H1 (cell line): ENCODE measurements at regions of chr14 and their contacts with region 1.

Region 1: GRCh38 chr14:21748869-21749303 is 75.3 kb upstream of the OR4E1 start:
- DNase-seq: peak; percentile 23 to 68
- H3K4me3 ChIP-seq: no peak overlapping the region
- H3K27ac ChIP-seq: no peak overlapping the region
- H3K4me1 ChIP-seq: no peaks in the 10 kb centered on the region; a peak in 1 of 7 replicates
- H3K27me3 ChIP-seq: no peaks in the 10 kb centered on the region
- CTCF ChIP-seq: peak; percentile 28 to 88 (median 83)
- EP300 ChIP-seq: no peak
- POLR2A ChIP-seq: no peak
- RAD21 ChIP-seq: peak; percentile 69 to 72

Region 2: DNA sequence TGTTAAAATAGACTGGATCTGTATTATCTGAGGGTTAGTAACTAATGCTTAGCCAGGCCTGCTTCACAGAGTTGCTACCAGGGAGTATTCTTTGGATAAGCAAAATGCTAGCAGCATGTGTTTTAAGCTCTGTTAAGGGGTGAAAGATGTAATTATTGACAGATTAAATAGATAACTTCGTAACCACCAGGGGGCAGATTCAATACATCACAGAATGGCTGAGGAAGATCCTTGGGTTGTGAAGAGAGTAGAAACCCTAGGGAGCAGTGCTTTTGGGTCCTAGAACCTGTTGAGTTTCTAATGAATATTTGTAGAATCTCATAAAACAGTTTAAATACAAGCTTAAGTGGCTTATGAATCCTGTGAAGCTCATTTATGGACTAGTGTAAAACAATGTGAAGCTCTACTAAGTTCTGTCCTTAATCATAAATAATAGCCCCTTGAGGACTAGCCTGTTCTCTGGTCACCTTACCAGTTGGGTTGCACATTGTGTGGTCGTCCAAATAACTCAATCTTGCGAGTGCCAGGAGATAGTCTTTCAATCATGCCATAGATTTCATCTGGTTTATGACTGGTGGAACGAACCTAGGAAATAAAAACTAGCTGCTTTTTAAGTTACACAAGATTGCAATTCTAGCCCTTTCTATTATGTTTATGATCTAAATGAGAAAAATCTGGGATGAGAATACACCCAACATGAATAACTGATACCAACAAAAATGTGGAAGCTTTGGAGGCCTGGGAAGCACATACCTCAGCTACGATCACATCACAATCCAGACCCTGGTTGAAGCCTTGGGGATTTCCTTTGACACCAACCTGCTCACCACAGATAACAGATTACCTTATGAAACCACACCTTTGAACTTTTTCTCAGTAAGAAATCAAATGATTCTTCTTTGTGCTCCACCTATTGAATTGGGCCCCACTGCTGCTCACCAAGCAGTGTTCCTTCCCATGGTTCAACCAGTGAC is 250.0 kb before region 1 on chr14:
- CTCF ChIA-PET with region 1: no interaction called
- POLR2A ChIA-PET with region 1: no interaction called
- DNase-seq: peak in 1 of 2 experiments; percentile 43
- H3K4me3 ChIP-seq: no peak overlapping the region
- H3K27ac ChIP-seq: peak overlapping the region; percentile 55; the same call in 1 of the 2 replicates
- H3K4me1 ChIP-seq: peaks cover 0 to 2% (median 1%) of the 10 kb centered on the region in 4 experiments; a peak in 2 of 7 replicates
- H3K27me3 ChIP-seq: no peaks in the 10 kb centered on the region
- CTCF ChIP-seq: peak in 2 of 3 experiments; percentile 51 to 56; a peak in 3 of 4 replicates
- EP300 ChIP-seq: no peak
- POLR2A ChIP-seq: no peak
- RAD21 ChIP-seq: peak; percentile 77 to 81

Region 3: DNA sequence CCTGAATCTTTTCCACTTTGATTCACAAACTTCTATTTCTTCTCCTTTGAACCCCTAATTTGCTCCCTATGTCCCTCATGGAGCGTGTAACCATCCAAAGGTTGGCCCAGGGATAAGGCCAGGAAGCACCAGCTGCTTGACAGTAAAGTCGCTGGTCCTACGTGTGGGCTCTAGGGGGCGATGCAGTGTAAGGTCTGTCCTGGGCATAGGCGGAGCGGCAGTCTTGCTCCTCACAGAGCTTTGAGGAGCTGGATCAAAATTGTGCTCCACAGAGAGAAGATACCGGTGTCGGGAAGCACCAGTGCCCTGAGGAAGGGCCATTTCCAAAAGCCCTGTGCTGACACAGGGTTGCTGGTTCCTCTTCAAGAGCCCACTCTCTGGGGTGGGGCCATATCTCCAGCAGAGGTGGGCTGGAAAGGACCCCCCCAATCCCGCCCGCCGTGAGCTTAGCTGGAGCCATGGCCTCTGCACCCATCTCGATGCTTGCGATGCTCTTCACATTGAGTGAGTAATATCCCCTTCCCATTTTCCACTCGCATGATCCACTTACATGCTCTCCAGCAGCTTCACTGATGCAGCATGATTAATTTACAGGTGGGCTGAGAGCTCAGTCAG is 25.3 kb before region 1 on chr14:
- CTCF ChIA-PET with region 1: interaction called, 10 read pairs
- POLR2A ChIA-PET with region 1: no interaction called
- DNase-seq: peak; percentile 47 to 79
- H3K4me3 ChIP-seq: no peak overlapping the region
- H3K27ac ChIP-seq: no peak overlapping the region
- H3K4me1 ChIP-seq: no peaks in the 10 kb centered on the region
- H3K27me3 ChIP-seq: no peaks in the 10 kb centered on the region
- CTCF ChIP-seq: peak; percentile 85 to 99 (median 96)
- EP300 ChIP-seq: no peak
- POLR2A ChIP-seq: no peak
- RAD21 ChIP-seq: peak; percentile 69 to 79

Region 4: GRCh38 chr14:21734457-21735074 is 14.3 kb before region 1 on chr14:
- CTCF ChIA-PET with region 1: interaction called, 28 read pairs
- POLR2A ChIA-PET with region 1: interaction called, 3 read pairs
- DNase-seq: no peak
- H3K4me3 ChIP-seq: no peak overlapping the region
- H3K27ac ChIP-seq: no peak overlapping the region
- H3K4me1 ChIP-seq: peaks cover 0 to 2% (median 0%) of the 10 kb centered on the region in 4 experiments; a peak in 1 of 7 replicates
- H3K27me3 ChIP-seq: no peaks in the 10 kb centered on the region; a peak in 1 of 7 replicates
- CTCF ChIP-seq: peak in 2 of 3 experiments; percentile 57 to 74; a peak in 2 of 4 replicates
- EP300 ChIP-seq: no peak
- POLR2A ChIP-seq: no peak
- RAD21 ChIP-seq: peak; percentile 40 to 53; a peak in 3 of 4 replicates

Region 5: DNA sequence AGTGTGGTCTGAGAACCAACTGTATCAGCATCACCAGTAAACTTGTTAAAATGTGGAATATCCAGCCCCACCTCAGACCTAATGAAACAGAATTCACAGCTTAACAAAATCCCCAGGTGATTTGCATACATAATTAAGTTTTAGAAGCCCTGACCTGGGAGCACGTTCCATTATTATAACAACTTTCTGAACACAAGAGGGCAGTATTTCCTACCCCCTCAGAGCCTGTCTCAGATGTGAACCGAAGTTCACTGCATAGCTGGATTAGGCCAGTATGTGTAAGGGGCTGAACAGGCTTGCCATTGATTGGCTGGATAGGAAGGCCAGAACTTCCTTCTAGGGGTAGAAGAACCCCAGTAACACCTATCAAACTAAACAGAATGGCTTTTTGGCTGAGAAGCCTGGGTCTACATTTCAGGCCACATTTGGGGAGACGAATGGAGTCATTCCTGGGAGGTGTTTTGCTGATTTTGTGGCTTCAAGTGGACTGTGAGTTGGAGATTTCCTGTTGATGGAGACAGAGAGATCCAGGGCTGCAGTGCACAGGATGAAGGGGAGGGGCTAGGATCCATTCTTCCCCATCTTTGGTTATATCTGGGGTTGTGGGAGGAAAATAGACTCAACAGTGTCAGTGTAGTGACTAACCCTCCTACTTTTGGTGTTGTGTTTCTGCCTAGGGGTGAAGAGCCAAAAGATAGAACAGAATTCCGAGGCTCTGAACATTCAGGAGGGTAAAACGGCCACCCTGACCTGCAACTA is 19.4 kb after region 1 on chr14:
- CTCF ChIA-PET with region 1: interaction called, 12 read pairs
- POLR2A ChIA-PET with region 1: no interaction called
- DNase-seq: no peak
- H3K4me3 ChIP-seq: no peak overlapping the region
- H3K27ac ChIP-seq: no peak overlapping the region
- H3K4me1 ChIP-seq: no peaks in the 10 kb centered on the region
- H3K27me3 ChIP-seq: no peaks in the 10 kb centered on the region
- CTCF ChIP-seq: peak in 2 of 3 experiments; percentile 68 to 77; a peak in 3 of 4 replicates
- EP300 ChIP-seq: no peak
- POLR2A ChIP-seq: no peak
- RAD21 ChIP-seq: peak; percentile 52 to 70